GM12878 (cell line): ENCODE measurements at regions of chr1 and their contacts with region 1.

Region 1: GRCh38 chr1:24987875-24988557 is 57.9 kb upstream of the RUNX3 start:
- DNase-seq: peak; percentile 42
- ATAC-seq: peak; percentile 93
- H3K4me3 ChIP-seq: no peak overlapping the region
- H3K27ac ChIP-seq: no peak overlapping the region
- H3K4me1 ChIP-seq: peaks cover 12% of the 10 kb centered on the region
- H3K27me3 ChIP-seq: no peaks in the 10 kb centered on the region
- CTCF ChIP-seq: no peak
- EP300 ChIP-seq: peak in 1 of 2 experiments; percentile 10; a peak in 1 of 4 replicates
- POLR2A ChIP-seq: no peak
- RAD21 ChIP-seq: 0 out of 2 replicates have a peak, but pooled peaks have one; percentile 5

Region 2: GRCh38 chr1:24970926-24971875 is 16.8 kb before region 1 on chr1:
- CTCF ChIA-PET with region 1: interaction called, 6 read pairs
- POLR2A ChIA-PET with region 1: interaction called, 6 read pairs
- RAD21 ChIA-PET with region 1: interaction called, 5 read pairs
- SMC1A ChIA-PET with region 1: interaction called, 28 read pairs
- in situ Hi-C with region 1: no loop called
- intact Hi-C with region 1: no loop called
- DNase-seq: no peak
- ATAC-seq: no peak
- H3K4me3 ChIP-seq: no peak overlapping the region
- H3K27ac ChIP-seq: no peak overlapping the region
- H3K4me1 ChIP-seq: peaks cover 35% of the 10 kb centered on the region
- H3K27me3 ChIP-seq: no peaks in the 10 kb centered on the region
- CTCF ChIP-seq: no peak
- EP300 ChIP-seq: no peak
- POLR2A ChIP-seq: no peak
- RAD21 ChIP-seq: no peak

Region 3: DNA sequence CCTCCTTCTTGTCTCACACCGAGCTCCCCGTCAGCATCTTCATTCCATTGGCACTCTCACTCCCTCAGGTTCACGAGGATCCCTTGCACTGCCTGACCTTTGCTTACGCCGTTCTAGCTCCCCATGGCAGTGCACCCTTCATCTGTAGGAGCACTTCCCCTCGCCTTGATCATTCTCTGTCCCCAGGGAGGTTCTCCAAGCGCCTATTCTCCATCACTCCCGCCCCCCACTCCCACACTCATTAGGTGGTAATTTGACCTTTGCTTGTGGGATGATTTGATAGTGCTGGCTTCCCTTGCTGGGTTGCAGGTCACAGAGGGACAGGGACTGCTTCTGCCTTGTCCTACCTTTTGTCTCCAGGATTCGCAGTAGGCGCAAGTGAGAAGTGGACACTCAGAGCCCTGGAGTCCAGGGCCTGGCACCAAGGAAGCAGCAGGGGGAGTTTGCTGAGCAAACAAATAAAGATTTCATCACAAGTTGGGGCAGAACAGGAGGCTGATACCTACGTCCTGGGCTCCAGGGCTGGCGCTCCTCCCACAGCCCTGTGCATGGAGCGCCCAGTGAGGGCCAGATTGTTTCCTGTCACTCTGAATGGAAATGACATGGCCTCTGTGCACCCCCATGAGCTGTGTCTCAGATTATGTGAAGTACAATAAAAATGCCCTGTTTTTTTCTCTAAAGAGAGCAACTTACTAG is 24.1 kb after region 1 on chr1:
- CTCF ChIA-PET with region 1: no interaction called
- POLR2A ChIA-PET with region 1: no interaction called
- RAD21 ChIA-PET with region 1: no interaction called
- SMC1A ChIA-PET with region 1: interaction called, 10 read pairs
- in situ Hi-C with region 1: no loop called
- intact Hi-C with region 1: no loop called
- DNase-seq: no peak
- ATAC-seq: no peak
- H3K4me3 ChIP-seq: no peak overlapping the region
- H3K27ac ChIP-seq: no peak overlapping the region
- H3K4me1 ChIP-seq: peaks cover 3% of the 10 kb centered on the region; the same call in 1 of the 2 replicates
- H3K27me3 ChIP-seq: no peaks in the 10 kb centered on the region
- CTCF ChIP-seq: no peak
- EP300 ChIP-seq: no peak
- POLR2A ChIP-seq: no peak
- RAD21 ChIP-seq: no peak

Region 4: DNA sequence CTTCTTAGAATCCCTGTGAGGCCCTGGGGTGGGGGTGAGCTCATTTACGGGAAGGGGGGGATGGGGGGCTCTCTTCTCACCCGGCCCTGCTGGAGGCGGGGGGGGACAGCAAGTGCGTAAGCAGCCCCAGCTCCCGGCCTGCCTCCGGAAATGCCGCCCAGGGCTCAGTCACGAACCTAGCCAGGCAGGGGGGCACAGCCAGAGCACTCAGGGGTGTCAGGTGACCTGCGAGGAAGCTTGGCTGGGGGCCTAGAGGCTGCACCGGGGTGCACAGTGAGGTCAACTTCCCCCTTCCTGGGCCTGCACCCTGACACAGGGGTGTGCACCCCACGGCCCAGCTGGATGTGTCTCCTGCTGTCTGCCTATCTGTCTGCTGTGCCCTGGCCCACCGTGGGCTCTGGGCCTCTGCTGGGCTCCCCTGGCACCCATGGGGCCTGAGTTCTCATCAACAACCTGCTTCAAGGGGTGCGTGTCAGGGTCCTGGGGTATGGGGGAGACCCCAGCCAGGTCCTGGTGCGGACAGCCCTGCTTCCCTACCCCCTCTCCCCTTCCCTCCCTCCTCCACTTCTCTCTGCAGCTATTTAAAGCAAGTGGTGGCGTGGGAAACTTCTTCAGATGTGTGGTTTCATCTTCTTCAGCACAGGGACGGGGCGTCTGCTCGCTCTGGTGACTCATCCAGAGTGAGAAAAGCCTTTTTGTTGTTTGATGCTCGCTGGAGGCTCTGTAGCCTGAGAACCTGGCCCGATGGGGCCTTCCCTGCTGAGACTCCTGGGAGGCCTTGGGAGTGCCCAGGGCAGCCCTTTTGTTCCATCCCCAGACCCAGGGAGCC is 34.6 kb after region 1 on chr1:
- CTCF ChIA-PET with region 1: interaction called, 4 read pairs
- POLR2A ChIA-PET with region 1: interaction called, 3 read pairs
- RAD21 ChIA-PET with region 1: interaction called, 10 read pairs
- SMC1A ChIA-PET with region 1: interaction called, 6 read pairs
- in situ Hi-C with region 1: no loop called
- intact Hi-C with region 1: no loop called
- DNase-seq: peak; percentile 97
- ATAC-seq: peak; percentile 85
- H3K4me3 ChIP-seq: peak overlapping the region; percentile 56
- H3K27ac ChIP-seq: peak overlapping the region; percentile 100
- H3K4me1 ChIP-seq: peaks cover 94% of the 10 kb centered on the region
- H3K27me3 ChIP-seq: no peaks in the 10 kb centered on the region
- CTCF ChIP-seq: no peak
- EP300 ChIP-seq: peak; percentile 96 to 97
- POLR2A ChIP-seq: no peak
- RAD21 ChIP-seq: peak; percentile 34

Region 5: GRCh38 chr1:25080294-25081209 is 92.5 kb after region 1 on chr1:
- CTCF ChIA-PET with region 1: no interaction called
- POLR2A ChIA-PET with region 1: no interaction called
- RAD21 ChIA-PET with region 1: no interaction called
- SMC1A ChIA-PET with region 1: no interaction called
- in situ Hi-C with region 1: no loop called
- intact Hi-C with region 1: no loop called
- DNase-seq: no peak
- ATAC-seq: peak; percentile 56
- H3K4me3 ChIP-seq: no peak overlapping the region
- H3K27ac ChIP-seq: no peak overlapping the region
- H3K4me1 ChIP-seq: peaks cover 5% of the 10 kb centered on the region; the same call in 1 of the 2 replicates
- H3K27me3 ChIP-seq: no peaks in the 10 kb centered on the region; a peak in 1 of 4 replicates
- CTCF ChIP-seq: no peak
- EP300 ChIP-seq: no peak
- POLR2A ChIP-seq: no peak
- RAD21 ChIP-seq: no peak